ENCODE measurements at regions of chr7 and their contacts with region 1.

Region 1: GRCh38 chr7:131040467-131040932 is 287.2 kb upstream of the MKLN1 start:
- DNase-seq: peak; percentile 73
- ATAC-seq: peak; percentile 64
- H3K4me3 Mint-ChIP-seq: no peak overlapping the region
- H3K27ac Mint-ChIP-seq: no peak overlapping the region
- H3K4me1 Mint-ChIP-seq: peaks cover 27% of the 10 kb centered on the region
- H3K27me3 Mint-ChIP-seq: no peaks in the 10 kb centered on the region

Region 2: GRCh38 chr7:130875265-130875741 is 165.2 kb before region 1 on chr7:
- CTCF ChIA-PET with region 1: interaction called, 12 read pairs
- POLR2A ChIA-PET with region 1: no interaction called
- DNase-seq: peak; percentile 66
- ATAC-seq: peak; percentile 80
- H3K4me3 Mint-ChIP-seq: no peak overlapping the region
- H3K27ac Mint-ChIP-seq: no peak overlapping the region
- H3K4me1 Mint-ChIP-seq: peaks cover 19% of the 10 kb centered on the region
- H3K27me3 Mint-ChIP-seq: no peaks in the 10 kb centered on the region

Region 3: DNA sequence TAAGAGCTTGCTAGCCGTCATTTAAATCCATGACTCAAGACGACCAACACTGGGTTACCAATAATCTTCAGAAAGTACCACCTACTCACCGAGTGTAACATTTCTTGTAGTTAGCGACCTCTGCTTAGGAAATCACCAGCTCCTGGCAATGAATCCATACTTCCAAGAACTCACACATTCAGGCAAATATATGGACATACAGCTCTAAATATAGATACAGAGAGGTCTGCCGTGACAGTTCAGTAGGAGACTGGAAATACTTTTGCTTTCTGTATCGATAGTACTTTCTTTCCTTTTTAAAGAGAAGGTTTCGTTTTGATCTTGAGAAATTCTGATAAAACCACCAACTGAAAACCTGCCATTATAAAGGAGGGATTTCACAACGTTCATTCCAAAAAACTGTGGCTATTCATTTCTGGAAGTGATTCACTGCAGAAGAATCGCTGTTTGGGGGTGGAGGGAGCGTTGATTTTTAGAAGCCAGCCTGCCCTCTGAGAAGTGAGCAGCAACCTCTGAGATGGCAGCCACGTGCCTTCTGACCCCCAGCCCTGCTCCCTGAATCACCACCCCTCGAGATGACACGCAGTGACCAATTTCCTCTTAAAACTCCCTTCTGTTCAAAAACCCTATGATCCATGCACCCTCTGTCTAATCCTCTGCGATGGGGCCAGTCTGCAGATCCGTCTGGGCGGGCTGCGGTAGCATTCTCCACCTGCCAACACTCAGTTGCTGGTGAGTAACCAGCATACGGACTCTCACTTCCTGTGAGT is 127.5 kb before region 1 on chr7:
- CTCF ChIA-PET with region 1: interaction called, 12 read pairs
- POLR2A ChIA-PET with region 1: interaction called, 3 read pairs
- DNase-seq: peak; percentile 89
- ATAC-seq: peak; percentile 92
- H3K4me3 Mint-ChIP-seq: peak overlapping the region; percentile 91
- H3K27ac Mint-ChIP-seq: peak overlapping the region; percentile 99
- H3K4me1 Mint-ChIP-seq: peaks cover 89% of the 10 kb centered on the region
- H3K27me3 Mint-ChIP-seq: no peaks in the 10 kb centered on the region

Region 4: GRCh38 chr7:130961128-130961601 is 79.3 kb before region 1 on chr7:
- CTCF ChIA-PET with region 1: interaction called, 22 read pairs
- POLR2A ChIA-PET with region 1: interaction called, 4 read pairs
- DNase-seq: peak; percentile 90
- ATAC-seq: peak; percentile 88
- H3K4me3 Mint-ChIP-seq: peak overlapping the region; percentile 91
- H3K27ac Mint-ChIP-seq: peak overlapping the region; percentile 99
- H3K4me1 Mint-ChIP-seq: peaks cover 48% of the 10 kb centered on the region
- H3K27me3 Mint-ChIP-seq: no peaks in the 10 kb centered on the region

Region 5: GRCh38 chr7:130988443-130988842 is 52.1 kb before region 1 on chr7:
- CTCF ChIA-PET with region 1: interaction called, 132 read pairs
- POLR2A ChIA-PET with region 1: no interaction called
- DNase-seq: no peak
- ATAC-seq: peak; percentile 43
- H3K4me3 Mint-ChIP-seq: no peak overlapping the region
- H3K27ac Mint-ChIP-seq: peak overlapping the region; percentile 28
- H3K4me1 Mint-ChIP-seq: peaks cover 51% of the 10 kb centered on the region
- H3K27me3 Mint-ChIP-seq: no peaks in the 10 kb centered on the region

Region 6: DNA sequence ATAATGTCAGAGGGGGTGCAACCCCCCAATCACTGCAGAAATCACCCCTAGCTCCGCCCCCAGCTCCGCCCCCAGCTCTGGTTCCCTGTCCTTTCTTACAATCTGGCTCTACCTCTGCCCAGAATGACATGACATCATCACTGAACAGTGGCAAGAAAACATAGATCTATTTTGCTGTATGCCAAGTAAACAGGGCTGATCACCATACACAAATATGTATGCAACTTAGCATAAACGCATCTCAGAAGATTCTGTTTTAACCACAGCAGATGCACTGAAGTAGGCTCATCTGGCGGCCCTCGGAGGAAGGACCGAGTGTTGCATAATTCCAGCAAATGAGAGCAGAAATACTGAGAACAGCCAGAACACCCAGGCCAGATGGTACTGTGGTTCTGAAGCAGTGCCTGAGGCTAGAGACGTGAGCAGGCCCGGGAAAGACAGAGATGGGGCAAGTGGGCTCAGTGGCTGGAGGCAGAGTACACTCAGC is 13.2 kb before region 1 on chr7:
- CTCF ChIA-PET with region 1: interaction called, 26 read pairs
- POLR2A ChIA-PET with region 1: interaction called, 3 read pairs
- DNase-seq: no peak
- ATAC-seq: peak; percentile 42
- H3K4me3 Mint-ChIP-seq: no peak overlapping the region
- H3K27ac Mint-ChIP-seq: peak overlapping the region; percentile 22
- H3K4me1 Mint-ChIP-seq: peaks cover 57% of the 10 kb centered on the region
- H3K27me3 Mint-ChIP-seq: no peaks in the 10 kb centered on the region

Region 7: DNA sequence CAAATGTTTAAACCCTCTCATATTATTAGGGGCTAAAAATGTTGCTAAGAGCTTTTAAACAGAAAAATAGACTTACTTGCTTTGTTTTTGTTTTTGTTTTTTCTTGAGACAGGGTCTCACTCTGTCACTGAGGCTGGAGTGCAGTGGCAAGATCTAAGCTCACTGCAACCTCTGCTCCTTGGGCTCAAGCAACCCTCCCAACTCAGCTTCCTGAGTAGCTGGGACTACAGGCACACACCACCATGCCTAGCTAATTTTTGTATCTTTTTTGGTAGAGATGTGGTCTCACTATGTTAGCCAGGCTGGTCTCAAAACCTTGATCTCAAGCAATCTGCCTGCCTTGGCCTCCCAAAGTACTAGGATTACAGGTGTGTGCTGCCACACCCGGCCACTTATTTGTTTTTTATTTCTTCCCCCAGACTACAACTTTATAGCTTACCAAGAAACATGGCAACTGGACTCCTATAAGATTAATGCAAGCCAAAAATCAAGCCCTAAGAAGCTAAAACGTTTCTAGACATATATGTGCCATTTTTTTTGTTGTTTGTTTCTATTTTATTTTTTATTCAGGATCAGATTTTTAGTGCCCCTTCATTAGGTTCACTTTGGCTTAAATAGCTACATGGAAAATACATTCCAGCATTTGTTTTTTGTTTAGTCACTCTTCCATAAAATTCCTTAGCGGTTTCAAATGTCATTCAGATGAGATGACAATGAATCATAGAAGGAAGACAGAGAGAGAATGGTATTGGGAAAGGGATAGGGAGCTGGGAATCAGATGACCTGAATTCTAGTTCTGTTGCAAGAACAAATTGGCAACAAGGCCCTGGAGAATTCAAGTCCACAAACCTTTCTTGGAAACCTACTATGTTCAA is 123.8 kb after region 1 on chr7:
- CTCF ChIA-PET with region 1: no interaction called
- POLR2A ChIA-PET with region 1: no interaction called
- DNase-seq: no peak
- ATAC-seq: no peak
- H3K4me3 Mint-ChIP-seq: no peak overlapping the region
- H3K27ac Mint-ChIP-seq: no peak overlapping the region
- H3K4me1 Mint-ChIP-seq: no peaks in the 10 kb centered on the region
- H3K27me3 Mint-ChIP-seq: peaks cover 4% of the 10 kb centered on the region